Mammary epithelial cell (primary cell): ENCODE measurements at regions of chr18 and their contacts with region 1.

Region 1: DNA sequence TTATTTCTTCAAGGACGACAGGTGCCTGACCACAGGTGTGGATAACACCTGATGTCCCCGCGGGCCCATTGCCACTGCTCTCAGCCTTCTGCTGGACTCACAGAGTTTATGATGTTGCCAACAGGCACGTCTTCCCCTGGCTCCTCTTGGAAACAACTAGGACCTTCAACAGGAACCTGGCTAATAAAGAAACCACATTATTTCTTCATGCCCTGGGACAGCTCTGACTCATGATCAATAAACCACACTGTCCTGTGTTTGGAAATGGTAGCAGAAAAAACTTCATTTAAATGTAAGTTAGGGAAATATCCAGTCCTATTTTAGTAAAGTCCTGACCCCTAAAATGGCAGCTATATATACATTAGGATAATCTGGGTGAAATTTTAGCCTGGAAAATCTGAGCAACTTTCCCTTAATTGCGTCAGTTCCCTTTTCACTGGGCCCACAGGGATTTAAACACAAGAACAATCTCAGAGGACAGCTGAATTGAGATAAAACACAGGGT is 158.9 kb downstream of the VAPA start:
- DNase-seq: peak; percentile 68
- H3K4me3 ChIP-seq: no peak overlapping the region
- H3K27ac ChIP-seq: no peak overlapping the region
- H3K4me1 ChIP-seq: no peaks in the 10 kb centered on the region
- H3K27me3 ChIP-seq: no peaks in the 10 kb centered on the region
- CTCF ChIP-seq: no peak

Region 2: GRCh38 chr18:10121786-10122542 is 49.2 kb after region 1 on chr18:
- CTCF ChIA-PET with region 1: no interaction called
- dilution Hi-C with region 1: no loop called
- in situ Hi-C with region 1: loop called in 1 of 2 experiments (anchors 10 kb)
- intact Hi-C with region 1: no loop called
- DNase-seq: no peak
- H3K4me3 ChIP-seq: no peak overlapping the region
- H3K27ac ChIP-seq: no peak overlapping the region
- H3K4me1 ChIP-seq: peaks cover 3% of the 10 kb centered on the region
- H3K27me3 ChIP-seq: no peaks in the 10 kb centered on the region
- CTCF ChIP-seq: no peak

Region 3: DNA sequence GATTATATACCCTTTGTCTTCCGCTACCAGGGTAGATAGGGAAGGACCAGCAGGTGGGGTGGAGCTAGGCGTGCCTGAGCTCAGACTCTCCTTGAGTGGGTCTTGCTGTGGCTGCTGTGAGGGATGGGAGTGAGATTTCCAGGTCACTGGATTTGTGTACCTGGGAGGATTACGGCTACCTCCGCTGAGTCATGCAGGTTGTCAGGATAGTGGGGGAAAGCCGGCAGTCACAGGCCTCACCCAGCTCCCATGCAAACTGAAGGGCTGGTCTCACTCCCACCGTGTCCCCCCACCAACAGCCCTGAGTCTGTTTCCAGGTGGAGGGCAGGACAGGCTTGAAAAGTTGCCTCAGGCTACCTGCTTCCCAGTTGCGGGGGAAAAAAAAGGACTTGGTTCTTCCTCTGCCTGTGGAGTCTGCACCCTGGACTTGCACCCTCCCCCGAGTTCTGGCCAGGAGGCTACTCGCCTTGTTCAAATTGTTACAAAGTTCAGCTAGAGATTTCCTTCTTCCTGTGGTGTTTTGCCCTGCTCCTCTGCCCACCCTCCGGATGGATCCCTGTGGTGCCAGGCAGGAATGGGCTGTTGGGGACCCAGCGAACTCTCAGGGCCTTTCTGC is 109.4 kb after region 1 on chr18:
- CTCF ChIA-PET with region 1: no interaction called
- dilution Hi-C with region 1: no loop called
- in situ Hi-C with region 1: no loop called
- intact Hi-C with region 1: no loop called
- DNase-seq: no peak
- H3K4me3 ChIP-seq: no peak overlapping the region
- H3K27ac ChIP-seq: no peak overlapping the region
- H3K4me1 ChIP-seq: no peaks in the 10 kb centered on the region
- H3K27me3 ChIP-seq: no peaks in the 10 kb centered on the region
- CTCF ChIP-seq: no peak